H1 (cell line): ENCODE measurements at regions of chr22 and their contacts with region 1.

Region 1: GRCh38 chr22:19178656-19179496 is at the start of gene SLC25A1:
- DNase-seq: peak; percentile 53 to 95
- H3K4me3 ChIP-seq: peak within 1 kb of the TSS; percentile 62 to 93 (median 73)
- H3K27ac ChIP-seq: peak within 1 kb of the TSS; percentile 74; the same call in 1 of the 2 replicates
- H3K4me1 ChIP-seq: peaks cover 0 to 35% (median 23%) of the 10 kb centered on the region in 4 experiments; a peak in 6 of 7 replicates
- H3K27me3 ChIP-seq: no peaks in the 10 kb centered on the region
- CTCF ChIP-seq: no peak
- EP300 ChIP-seq: no peak
- POLR2A ChIP-seq: no peak; a peak in 1 of 3 replicates
- RAD21 ChIP-seq: no peak
- total RNA-seq, gene SLC25A1: 148 and 157 TPM in 2 replicates

Region 2: GRCh38 chr22:19122143-19122751 is 56.6 kb before region 1 on chr22 and contains the start of gene DGCR2:
- CTCF ChIA-PET with region 1: no interaction called
- POLR2A ChIA-PET with region 1: interaction called, 15 read pairs
- DNase-seq: peak; percentile 91 to 97
- H3K4me3 ChIP-seq: peak within 1 kb of the TSS; percentile 85 to 98 (median 92)
- H3K27ac ChIP-seq: peak within 1 kb of the TSS; percentile 93
- H3K4me1 ChIP-seq: peaks cover 0 to 9% (median 6%) of the 10 kb centered on the region in 4 experiments; a peak in 5 of 7 replicates
- H3K27me3 ChIP-seq: no peaks in the 10 kb centered on the region
- CTCF ChIP-seq: no peak
- EP300 ChIP-seq: no peak
- POLR2A ChIP-seq: peak in 1 of 2 experiments; percentile 42; a peak in 1 of 3 replicates
- RAD21 ChIP-seq: no peak
- total RNA-seq, gene DGCR2: 62.2 and 65.5 TPM in 2 replicates

Region 3: GRCh38 chr22:19143967-19144400 is 34.9 kb before region 1 on chr22:
- CTCF ChIA-PET with region 1: interaction called, 28 read pairs
- POLR2A ChIA-PET with region 1: no interaction called
- DNase-seq: no peak
- H3K4me3 ChIP-seq: peak overlapping the region; percentile 47 to 94 (median 92)
- H3K27ac ChIP-seq: 0 out of 2 replicates have a peak overlapping the region, but pooled peaks have one; percentile 59
- H3K4me1 ChIP-seq: peaks cover 0 to 12% (median 5%) of the 10 kb centered on the region in 4 experiments; a peak in 5 of 7 replicates
- H3K27me3 ChIP-seq: peaks cover 16 to 29% (median 22%) of the 10 kb centered on the region in 4 experiments
- CTCF ChIP-seq: no peak
- EP300 ChIP-seq: no peak
- POLR2A ChIP-seq: no peak
- RAD21 ChIP-seq: no peak

Region 4: DNA sequence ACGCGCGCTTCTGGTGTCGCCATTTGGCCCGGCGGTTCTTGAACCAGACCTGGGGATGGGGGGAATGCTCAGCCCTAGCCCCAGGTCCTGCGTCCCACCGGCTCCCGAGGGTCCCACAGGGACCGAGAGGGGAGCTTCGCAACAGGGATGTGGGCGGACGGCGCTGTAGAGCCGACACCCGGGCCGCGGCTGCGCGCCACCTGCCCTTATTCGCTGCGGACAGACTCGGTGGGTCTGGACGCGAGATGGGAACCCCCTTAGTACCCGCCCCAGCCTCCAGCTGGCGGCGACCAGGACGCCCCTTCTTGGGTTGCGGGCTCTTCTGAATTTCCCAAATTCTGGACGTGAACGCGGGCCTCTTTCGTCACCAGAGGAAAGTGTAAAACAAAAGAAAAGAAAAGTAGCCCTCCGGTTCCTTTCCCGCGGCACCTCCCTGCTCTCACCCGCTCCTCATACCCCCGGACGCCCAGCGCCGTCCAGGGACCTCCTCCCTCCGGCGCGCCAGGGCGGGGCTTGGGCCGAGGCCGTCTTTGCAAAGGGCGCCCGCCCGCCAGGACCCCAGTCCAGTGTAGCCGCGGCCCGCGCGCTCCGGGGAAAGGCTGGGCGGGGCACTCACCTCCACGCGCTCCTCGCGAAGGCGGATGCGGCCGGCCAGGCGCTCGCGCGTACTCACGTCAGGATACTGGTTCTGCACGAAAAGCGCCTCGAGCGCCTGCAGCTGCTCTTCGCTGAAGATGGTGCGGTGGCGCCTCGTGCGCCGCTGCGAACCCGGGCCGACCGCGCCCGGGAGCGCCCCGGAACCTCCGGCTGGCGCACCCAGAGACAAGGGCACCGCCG is 29.6 kb before region 1 on chr22:
- CTCF ChIA-PET with region 1: interaction called, 28 read pairs
- POLR2A ChIA-PET with region 1: no interaction called
- DNase-seq: peak in 1 of 2 experiments; percentile 84
- H3K4me3 ChIP-seq: peak overlapping the region; percentile 3 to 53 (median 8); a peak in 7 of 8 replicates
- H3K27ac ChIP-seq: no peak overlapping the region
- H3K4me1 ChIP-seq: peaks cover 0 to 7% (median 5%) of the 10 kb centered on the region in 4 experiments; a peak in 5 of 7 replicates
- H3K27me3 ChIP-seq: peaks cover 52 to 71% (median 61%) of the 10 kb centered on the region in 4 experiments
- CTCF ChIP-seq: no peak
- EP300 ChIP-seq: no peak
- POLR2A ChIP-seq: no peak
- RAD21 ChIP-seq: no peak

Region 5: DNA sequence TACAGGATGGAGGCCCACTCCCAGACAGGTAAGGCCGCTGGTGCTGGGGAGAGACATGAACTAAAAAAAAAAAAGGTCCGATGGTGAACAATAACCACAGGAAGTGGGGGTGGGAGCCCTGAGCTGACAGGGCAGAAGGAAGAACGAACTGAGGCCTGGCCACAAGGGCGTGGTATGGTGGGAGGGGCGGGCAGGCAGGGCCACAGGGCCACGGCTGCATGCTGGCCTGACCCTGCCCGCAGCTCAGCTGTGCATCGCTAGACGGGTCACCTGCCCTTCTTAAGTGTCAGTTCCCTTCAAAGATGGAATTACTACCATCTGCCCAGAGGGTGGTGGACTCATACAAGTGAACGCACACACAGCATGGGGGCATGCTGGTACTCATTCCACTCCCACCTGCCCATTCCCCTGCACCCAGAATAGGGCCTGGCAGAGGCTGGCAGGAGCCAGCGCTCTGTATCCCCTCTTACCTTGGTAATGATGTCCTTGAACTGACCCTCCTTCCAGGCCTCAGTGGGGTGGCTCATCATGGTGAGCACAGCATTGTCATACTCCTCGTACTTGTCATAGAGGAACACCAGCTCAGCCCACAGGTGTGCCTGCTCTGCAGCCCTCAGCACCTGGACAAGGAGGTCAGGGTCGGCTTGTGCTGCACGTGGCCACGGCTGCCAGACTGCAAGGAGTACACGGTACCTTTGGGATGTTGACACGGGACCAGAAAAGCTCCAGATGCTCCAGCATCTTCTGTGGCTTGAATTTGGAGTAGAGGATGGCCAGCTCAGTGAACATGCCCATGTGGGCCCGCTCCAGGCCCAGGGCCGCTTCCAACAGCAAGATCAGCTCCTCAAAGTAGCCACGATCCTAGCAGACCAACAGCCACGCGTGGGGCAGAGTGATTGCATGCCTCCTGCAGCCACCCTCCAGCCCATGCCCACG is 17.2 kb after region 1 on chr22:
- CTCF ChIA-PET with region 1: interaction called, 7 read pairs
- POLR2A ChIA-PET with region 1: interaction called, 11 read pairs
- DNase-seq: no peak
- H3K4me3 ChIP-seq: no peak overlapping the region
- H3K27ac ChIP-seq: no peak overlapping the region
- H3K4me1 ChIP-seq: peaks cover 0 to 2% (median 0%) of the 10 kb centered on the region in 4 experiments; a peak in 1 of 7 replicates
- H3K27me3 ChIP-seq: no peaks in the 10 kb centered on the region
- CTCF ChIP-seq: no peak
- EP300 ChIP-seq: no peak
- POLR2A ChIP-seq: no peak
- RAD21 ChIP-seq: no peak